Activated CD4-positive, alpha-beta T cell treated with anti-CD3 and anti-CD28 coated beads, Interleukin-2, amount 10 ng/mL, durations not matched to agents 24 days and 14 days (primary cell): ENCODE measurements at regions of chr16 and their contacts with region 1.

Region 1: DNA sequence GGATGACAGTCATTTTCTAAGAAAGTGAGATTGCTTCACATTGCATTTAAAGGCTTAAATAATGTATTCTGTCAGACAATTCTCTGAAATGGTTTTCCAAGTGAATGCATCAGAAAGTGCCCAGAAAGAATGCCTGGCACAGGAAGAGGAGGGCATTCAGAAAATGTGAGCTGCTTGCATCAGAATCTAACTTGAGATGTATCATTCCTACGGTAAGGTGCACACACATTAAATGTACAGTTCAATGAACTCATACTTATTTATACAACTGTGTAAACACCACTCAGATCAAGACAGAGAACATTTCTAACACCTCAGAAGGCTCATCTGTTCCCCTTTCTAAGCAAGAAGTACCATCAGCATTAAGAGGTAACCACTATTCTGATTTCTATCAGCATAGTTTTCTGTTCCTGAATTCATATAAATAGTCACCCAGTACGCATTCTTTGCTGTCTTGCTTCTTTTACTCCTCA is 638.0 kb downstream of the MAF start:
- DNase-seq: no peak
- H3K4me3 Mint-ChIP-seq: no peak overlapping the region
- H3K27ac Mint-ChIP-seq: peak overlapping the region; percentile 46
- H3K4me1 Mint-ChIP-seq: peaks cover 8% of the 10 kb centered on the region
- H3K27me3 Mint-ChIP-seq: no peaks in the 10 kb centered on the region

Region 2: GRCh38 chr16:78896280-78896679 is 66.2 kb before region 1 on chr16:
- intact Hi-C with region 1: loop called (anchors 1 kb)
- DNase-seq: no peak
- H3K4me3 Mint-ChIP-seq: no peak overlapping the region
- H3K27ac Mint-ChIP-seq: peak overlapping the region; percentile 56
- H3K4me1 Mint-ChIP-seq: peaks cover 33% of the 10 kb centered on the region
- H3K27me3 Mint-ChIP-seq: peaks cover 2% of the 10 kb centered on the region